ENCODE measurements at regions of chr1 and their contacts with region 1.

Region 1: GRCh38 chr1:170664828-170665612 is 1.1 kb downstream of the PRRX1 start:
- DNase-seq: peak in 1 of 2 donors; percentile 61
- ATAC-seq: peak; percentile 33 to 42
- H3K4me3 ChIP-seq: peak overlapping the region; percentile 82 to 93 (median 88)
- H3K27ac ChIP-seq: peak overlapping the region; percentile 90 to 100 (median 96)
- H3K4me1 ChIP-seq: peaks cover 26 to 40% of the 10 kb centered on the region in 2 donors
- H3K27me3 ChIP-seq: no peaks in the 10 kb centered on the region
- CTCF ChIP-seq: no peak
- POLR2A ChIP-seq: peak; percentile 38 to 44

Region 2: GRCh38 chr1:170698301-170699275 is 33.6 kb after region 1 on chr1:
- in situ Hi-C with region 1: no loop called
- intact Hi-C with region 1: no loop called
- DNase-seq: peak in 1 of 2 donors; percentile 32
- ATAC-seq: peak; percentile 63 to 76
- H3K4me3 ChIP-seq: peak overlapping the region in 3 of 4 donors; percentile 1 to 24 (median 13)
- H3K27ac ChIP-seq: peak overlapping the region; percentile 73 to 90 (median 80)
- H3K4me1 ChIP-seq: peaks cover 70 to 85% of the 10 kb centered on the region in 2 donors
- H3K27me3 ChIP-seq: no peaks in the 10 kb centered on the region
- CTCF ChIP-seq: no peak
- POLR2A ChIP-seq: no peak

Region 3: GRCh38 chr1:170749959-170750358 is 84.9 kb after region 1 on chr1:
- in situ Hi-C with region 1: loop called in 2 of 4 experiments (anchors 10 to 25 kb)
- intact Hi-C with region 1: no loop called
- DNase-seq: no peak
- ATAC-seq: no peak
- H3K4me3 ChIP-seq: no peak overlapping the region
- H3K27ac ChIP-seq: no peak overlapping the region
- H3K4me1 ChIP-seq: peaks cover 5 to 10% of the 10 kb centered on the region in 2 donors
- H3K27me3 ChIP-seq: no peaks in the 10 kb centered on the region
- CTCF ChIP-seq: no peak
- POLR2A ChIP-seq: no peak

Region 4: DNA sequence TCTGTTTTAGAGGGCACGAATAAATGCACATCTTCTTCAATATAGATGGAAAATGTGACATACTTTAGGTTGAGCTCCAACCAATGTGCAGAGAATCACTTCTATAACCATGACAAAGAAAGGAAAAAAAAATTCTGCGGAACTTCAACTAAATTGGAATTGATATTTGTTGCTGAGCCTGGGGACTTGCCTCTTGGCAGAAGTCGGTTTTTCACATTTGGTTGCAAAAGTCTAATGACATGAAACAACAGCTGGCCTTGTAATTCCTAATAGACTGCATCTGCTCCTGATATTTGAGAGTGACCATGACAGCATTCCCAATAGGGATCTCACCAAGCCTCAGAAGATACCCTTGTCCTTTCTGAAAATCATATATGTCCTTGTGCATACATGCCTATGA is 111.8 kb after region 1 on chr1:
- in situ Hi-C with region 1: loop called in 2 of 4 experiments (anchors 10 to 25 kb)
- intact Hi-C with region 1: no loop called
- DNase-seq: no peak
- ATAC-seq: peak in 1 of 2 donors; percentile 58
- H3K4me3 ChIP-seq: no peak overlapping the region
- H3K27ac ChIP-seq: peak overlapping the region in 1 of 4 donors; percentile 26
- H3K4me1 ChIP-seq: no peaks in the 10 kb centered on the region
- H3K27me3 ChIP-seq: no peaks in the 10 kb centered on the region
- CTCF ChIP-seq: no peak
- POLR2A ChIP-seq: no peak

Measured in gastrocnemius medialis (tissue), 4 donors.